Dendritic cell treated with granulocyte-macrophage colony-stimulating factor and Interleukin-4, amounts not matched to agents 40 ng/mL and 50 ng/mL, for 4 days (primary cell): ENCODE measurements at regions of chr10 and their contacts with region 1.

Region 1: DNA sequence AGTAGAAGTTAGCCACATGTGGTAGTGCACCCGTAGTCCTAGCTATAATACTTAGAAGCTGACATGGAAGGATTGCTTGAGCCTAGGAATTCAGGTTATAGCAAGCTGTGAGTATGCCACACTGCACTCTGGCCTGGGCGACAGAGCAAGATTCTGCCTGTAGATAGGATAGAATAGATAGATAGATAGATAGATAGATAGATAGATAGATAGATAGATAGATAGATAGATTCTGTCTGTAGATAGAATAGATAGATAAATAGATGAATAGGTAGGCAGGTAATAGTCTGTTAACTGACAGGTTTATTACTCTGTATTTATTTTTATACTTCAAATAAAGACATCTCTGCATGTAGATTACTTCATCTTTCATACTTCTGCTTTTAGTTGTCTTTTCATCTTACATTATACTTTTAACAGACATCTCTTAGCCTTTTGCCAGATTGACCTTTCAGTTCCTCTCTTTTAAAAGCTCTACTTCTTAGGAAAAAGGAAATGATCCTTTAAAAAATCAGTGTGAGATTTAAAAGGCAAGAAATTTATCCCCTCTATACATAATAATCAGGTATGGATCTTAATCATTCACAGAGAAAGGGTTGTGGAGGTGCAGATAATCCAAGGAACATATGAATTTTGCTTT is 31.8 kb downstream of the CCAR1 start:
- H3K4me3 Mint-ChIP-seq: peak overlapping the region; percentile 23
- H3K27ac Mint-ChIP-seq: peak overlapping the region; percentile 83
- H3K4me1 Mint-ChIP-seq: peaks cover 14% of the 10 kb centered on the region
- H3K27me3 Mint-ChIP-seq: no peaks in the 10 kb centered on the region

Region 2: GRCh38 chr10:68331455-68332258 is 421.2 kb before region 1 on chr10 and contains the start of gene HNRNPH3:
- intact Hi-C with region 1: loop called (anchors 10 kb)
- H3K4me3 Mint-ChIP-seq: peak within 1 kb of the TSS; percentile 99
- H3K27ac Mint-ChIP-seq: peak within 1 kb of the TSS; percentile 100
- H3K4me1 Mint-ChIP-seq: peaks cover 66% of the 10 kb centered on the region
- H3K27me3 Mint-ChIP-seq: no peaks in the 10 kb centered on the region

Region 3: DNA sequence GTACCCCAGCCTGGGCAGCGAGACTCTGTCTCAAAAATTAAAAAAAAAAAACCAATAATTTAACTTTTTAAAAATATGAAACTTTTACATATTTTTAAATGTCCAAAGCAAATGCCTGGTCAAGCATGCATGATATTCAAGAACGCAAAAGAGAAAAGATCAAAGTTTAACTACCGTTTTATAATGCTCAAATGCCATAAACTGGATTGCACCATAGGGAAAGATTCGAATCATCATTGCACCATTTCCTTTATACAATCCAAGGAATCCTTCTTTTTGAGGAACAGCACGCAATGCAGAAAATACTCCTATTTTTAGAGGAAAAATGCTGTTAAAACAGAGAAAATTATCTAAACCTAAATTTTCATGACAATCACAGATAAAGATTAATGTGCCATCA is 246.4 kb before region 1 on chr10:
- intact Hi-C with region 1: no loop called
- H3K4me3 Mint-ChIP-seq: no peak overlapping the region
- H3K27ac Mint-ChIP-seq: no peak overlapping the region
- H3K4me1 Mint-ChIP-seq: no peaks in the 10 kb centered on the region
- H3K27me3 Mint-ChIP-seq: no peaks in the 10 kb centered on the region

Region 4: DNA sequence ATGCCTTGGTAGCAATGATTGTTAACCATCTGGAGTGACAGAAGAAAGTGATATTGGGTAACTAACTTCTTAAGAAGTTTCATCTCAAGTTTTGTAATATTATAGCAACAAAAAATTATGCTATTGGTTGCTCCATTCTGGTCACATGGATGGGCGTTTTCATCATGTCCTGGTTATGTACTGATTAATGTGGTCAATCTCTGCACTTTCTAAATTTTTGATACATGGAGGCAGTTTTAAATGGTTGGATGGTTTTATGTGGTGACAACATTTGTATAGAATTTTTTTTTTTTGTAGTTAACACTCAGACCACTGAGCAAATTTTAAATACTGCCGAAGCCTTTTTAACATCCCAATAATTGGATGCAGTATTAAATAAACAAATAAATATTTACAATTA is 87.0 kb before region 1 on chr10:
- intact Hi-C with region 1: no loop called
- H3K4me3 Mint-ChIP-seq: no peak overlapping the region
- H3K27ac Mint-ChIP-seq: no peak overlapping the region
- H3K4me1 Mint-ChIP-seq: no peaks in the 10 kb centered on the region
- H3K27me3 Mint-ChIP-seq: no peaks in the 10 kb centered on the region

Region 5: DNA sequence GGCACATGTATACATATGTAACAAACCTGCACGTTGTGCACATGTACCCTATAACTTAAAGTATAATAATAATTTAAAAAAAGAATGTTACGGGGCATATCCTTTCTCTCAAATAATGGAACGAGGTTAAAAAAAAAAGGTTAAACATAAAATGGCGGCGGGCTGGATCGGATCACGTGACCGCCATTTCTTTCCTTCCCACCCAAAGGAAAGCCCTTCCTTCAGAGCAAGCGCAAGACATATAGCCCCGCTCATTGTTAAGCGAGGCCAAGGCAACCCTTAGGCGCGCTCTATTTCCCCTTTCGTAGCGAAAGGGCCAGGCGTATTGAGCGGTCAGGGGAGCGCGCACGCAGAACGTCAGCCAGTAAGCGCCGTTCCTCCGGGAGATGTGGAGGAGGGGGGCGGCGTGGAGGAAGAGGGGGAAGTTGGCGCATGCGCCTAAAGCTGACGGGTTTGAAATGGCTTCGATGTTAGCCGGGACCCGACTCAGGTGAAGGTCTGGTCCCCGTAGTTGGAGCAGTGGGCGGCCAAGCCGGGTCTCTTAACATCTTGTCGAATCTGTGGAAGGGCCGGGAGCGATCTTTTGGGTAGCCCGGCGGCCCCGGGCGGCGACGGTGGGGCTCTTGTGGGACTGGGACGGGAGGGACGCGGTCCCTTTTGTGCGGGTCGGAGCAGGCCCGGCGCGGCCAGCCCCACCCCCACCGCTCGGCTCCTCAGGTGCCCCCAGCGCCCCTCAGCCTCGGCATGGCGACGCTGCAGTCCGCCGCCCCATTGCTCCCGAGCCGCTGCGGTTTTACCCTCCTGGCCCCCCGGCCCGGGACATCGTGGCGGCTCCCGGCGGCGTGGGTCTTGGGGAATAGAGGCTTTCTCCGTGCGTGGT is 31.8 kb before region 1 on chr10 and contains the start of gene CCAR1:
- intact Hi-C with region 1: loop called (anchors 2 kb)
- H3K4me3 Mint-ChIP-seq: peak within 1 kb of the TSS; percentile 93
- H3K27ac Mint-ChIP-seq: peak within 1 kb of the TSS; percentile 97
- H3K4me1 Mint-ChIP-seq: peaks cover 10% of the 10 kb centered on the region
- H3K27me3 Mint-ChIP-seq: peaks cover 7% of the 10 kb centered on the region

Region 6: GRCh38 chr10:68955832-68956532 is 203.2 kb after region 1 on chr10 and contains the start of gene DDX21:
- intact Hi-C with region 1: loop called (anchors 10 kb)
- H3K4me3 Mint-ChIP-seq: peak within 1 kb of the TSS; percentile 90
- H3K27ac Mint-ChIP-seq: peak within 1 kb of the TSS; percentile 93
- H3K4me1 Mint-ChIP-seq: peaks cover 23% of the 10 kb centered on the region
- H3K27me3 Mint-ChIP-seq: no peaks in the 10 kb centered on the region